Activated T-helper 2 cell treated with anti-CD3 and anti-CD28 coated beads, Interferon-gamma antibody, Interleukin-2, Interleukin-4, amounts not matched to agents 10 μg/mL and 5 μg/mL and 100 μg/mL, durations not matched to agents 14 hours and 24 hours and 36 hours (primary cell): ENCODE measurements at regions of chr13 and their contacts with region 1.

Region 1: DNA sequence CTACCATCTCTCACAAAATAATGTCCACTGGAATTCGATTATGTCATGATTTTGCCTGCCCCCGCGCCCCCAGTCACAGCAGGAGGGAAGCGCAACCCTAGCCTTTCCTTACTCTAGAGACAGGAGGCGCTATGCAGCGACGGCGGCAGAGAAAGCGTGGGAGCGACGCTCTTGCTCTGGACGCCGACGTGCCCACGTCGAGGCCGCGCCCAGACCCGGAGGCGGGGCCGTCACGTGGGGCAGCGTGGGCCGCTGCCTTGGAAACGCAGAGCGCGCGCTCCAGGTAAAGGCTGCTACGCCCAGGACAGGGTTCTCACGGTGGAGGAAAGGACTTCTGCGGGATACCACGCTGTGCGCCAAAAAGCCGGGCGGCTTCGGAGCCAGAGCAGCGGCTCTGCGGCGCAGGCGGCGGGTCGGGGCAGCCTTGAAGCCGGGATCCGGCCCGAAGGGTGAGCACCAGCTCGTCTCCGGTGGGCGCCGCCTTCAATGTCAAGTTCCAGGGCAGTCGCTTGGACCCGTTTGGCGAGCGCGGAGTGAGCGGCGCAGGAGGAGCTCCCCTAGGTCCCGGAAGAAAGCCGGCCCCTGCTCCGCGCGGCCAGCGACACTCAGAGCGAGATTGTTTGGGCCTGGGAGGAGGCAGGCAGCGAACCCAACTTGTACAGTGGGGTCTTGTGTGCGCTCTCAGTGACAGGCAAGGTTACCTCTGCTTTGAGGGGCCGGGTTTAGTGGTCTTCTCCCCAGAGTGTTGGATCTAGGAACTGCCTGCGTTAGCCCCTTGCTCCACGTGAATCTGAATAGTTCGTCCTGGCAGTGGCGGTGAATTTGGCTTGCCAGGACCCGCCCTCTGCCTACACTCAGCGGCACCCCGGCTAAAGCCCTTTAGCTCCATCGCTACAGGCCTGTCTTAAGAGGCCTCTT is 121.7 kb downstream of the MRPL57 start:
- DNase-seq: peak; percentile 83
- H3K4me3 Mint-ChIP-seq: peak overlapping the region; percentile 91
- H3K27ac Mint-ChIP-seq: peak overlapping the region; percentile 87
- H3K4me1 Mint-ChIP-seq: peaks cover 21% of the 10 kb centered on the region
- H3K27me3 Mint-ChIP-seq: peaks cover 3% of the 10 kb centered on the region

Region 2: GRCh38 chr13:21176220-21176982 is 121.8 kb before region 1 on chr13 and contains the starts of genes MRPL57 and SKA3:
- intact Hi-C with region 1: loop called (anchors 10 kb)
- DNase-seq: peak; percentile 94
- H3K4me3 Mint-ChIP-seq: peak within 1 kb of the TSS; percentile 97
- H3K27ac Mint-ChIP-seq: peak within 1 kb of the TSS; percentile 95
- H3K4me1 Mint-ChIP-seq: peaks cover 17% of the 10 kb centered on the region
- H3K27me3 Mint-ChIP-seq: no peaks in the 10 kb centered on the region
- total RNA-seq, gene MRPL57: 28.5 and 28.9 TPM in 2 replicates
- total RNA-seq, gene SKA3: 29.4 and 29.6 TPM in 2 replicates

Region 3: GRCh38 chr13:21344662-21345176 is 46.5 kb after region 1 on chr13:
- intact Hi-C with region 1: loop called (anchors 2 kb)
- DNase-seq: peak; percentile 36
- H3K4me3 Mint-ChIP-seq: peak overlapping the region; percentile 68
- H3K27ac Mint-ChIP-seq: peak overlapping the region; percentile 79
- H3K4me1 Mint-ChIP-seq: peaks cover 26% of the 10 kb centered on the region
- H3K27me3 Mint-ChIP-seq: no peaks in the 10 kb centered on the region

Region 4: GRCh38 chr13:21476893-21477472 is 178.8 kb after region 1 on chr13:
- intact Hi-C with region 1: loop called (anchors 1 kb)
- DNase-seq: peak; percentile 72
- H3K4me3 Mint-ChIP-seq: peak overlapping the region; percentile 78
- H3K27ac Mint-ChIP-seq: peak overlapping the region; percentile 26
- H3K4me1 Mint-ChIP-seq: peaks cover 10% of the 10 kb centered on the region
- H3K27me3 Mint-ChIP-seq: peaks cover 3% of the 10 kb centered on the region

Region 5: DNA sequence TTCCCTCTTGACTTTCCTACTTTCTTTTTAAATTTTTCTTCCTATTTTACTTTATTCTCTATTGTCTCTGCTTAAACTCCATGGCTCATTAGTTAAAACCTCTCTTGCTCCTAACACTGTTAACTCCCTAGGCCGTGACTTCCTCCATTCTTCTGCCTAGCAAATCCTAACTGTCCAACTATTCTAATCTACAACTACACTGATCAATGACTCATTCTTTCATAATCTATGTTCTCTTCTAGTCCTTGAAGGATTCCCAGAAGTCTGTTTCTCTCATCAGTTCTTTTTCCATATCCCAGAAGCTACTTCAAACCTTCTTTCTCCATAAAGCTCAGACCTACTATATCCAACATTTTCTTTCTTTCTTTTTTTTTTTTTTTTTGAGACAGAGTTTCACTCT is 238.9 kb after region 1 on chr13:
- intact Hi-C with region 1: no loop called
- DNase-seq: no peak
- H3K4me3 Mint-ChIP-seq: no peak overlapping the region
- H3K27ac Mint-ChIP-seq: no peak overlapping the region
- H3K4me1 Mint-ChIP-seq: peaks cover 17% of the 10 kb centered on the region
- H3K27me3 Mint-ChIP-seq: no peaks in the 10 kb centered on the region

Region 6: DNA sequence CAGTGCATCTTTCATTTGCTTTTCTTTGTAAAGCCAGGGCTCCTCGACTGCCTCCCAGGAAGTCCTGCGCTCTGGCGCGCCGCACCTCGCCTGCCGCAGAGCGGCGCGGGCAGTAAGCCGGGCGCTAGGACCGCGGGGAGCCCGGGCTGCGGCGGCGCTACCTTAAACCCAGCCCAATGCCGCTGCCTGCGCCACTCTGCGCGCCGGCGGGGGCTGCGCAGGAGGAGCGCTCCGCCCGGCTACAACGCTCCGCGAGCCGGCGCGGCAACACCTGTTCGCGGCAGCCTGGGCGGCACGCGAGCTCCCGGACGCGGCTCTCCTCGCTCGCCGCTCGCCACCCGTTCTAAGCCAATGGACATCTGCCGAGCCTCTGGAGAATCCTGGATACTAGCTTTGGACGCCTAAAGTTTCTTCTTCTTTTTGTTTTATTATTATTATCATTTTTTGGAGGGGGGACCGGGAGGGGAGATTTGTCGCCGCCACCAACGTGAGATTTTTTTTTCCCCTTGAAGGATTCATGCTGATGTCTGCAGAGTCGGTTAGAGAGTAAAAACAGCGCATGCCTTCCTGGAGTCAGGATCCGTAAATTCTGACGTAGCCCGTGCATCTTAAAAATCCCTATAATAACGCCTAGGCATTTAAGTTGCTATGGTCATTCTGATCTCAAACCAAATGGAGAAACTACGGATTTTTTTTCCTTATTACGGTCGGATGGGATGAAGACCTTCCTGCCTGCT is 372.9 kb after region 1 on chr13 and contains the start of gene FGF9:
- intact Hi-C with region 1: loop called (anchors 10 kb)
- DNase-seq: peak; percentile 76
- H3K4me3 Mint-ChIP-seq: peak within 1 kb of the TSS; percentile 79
- H3K27ac Mint-ChIP-seq: no peak within 1 kb of the TSS
- H3K4me1 Mint-ChIP-seq: peaks cover 43% of the 10 kb centered on the region
- H3K27me3 Mint-ChIP-seq: peaks cover 69% of the 10 kb centered on the region
- total RNA-seq, gene FGF9: 0.39 and 0.60 TPM in 2 replicates